Mucosa of descending colon (tissue), 3 donors: ENCODE measurements at regions of chr12 and their contacts with region 1.

Region 1: DNA sequence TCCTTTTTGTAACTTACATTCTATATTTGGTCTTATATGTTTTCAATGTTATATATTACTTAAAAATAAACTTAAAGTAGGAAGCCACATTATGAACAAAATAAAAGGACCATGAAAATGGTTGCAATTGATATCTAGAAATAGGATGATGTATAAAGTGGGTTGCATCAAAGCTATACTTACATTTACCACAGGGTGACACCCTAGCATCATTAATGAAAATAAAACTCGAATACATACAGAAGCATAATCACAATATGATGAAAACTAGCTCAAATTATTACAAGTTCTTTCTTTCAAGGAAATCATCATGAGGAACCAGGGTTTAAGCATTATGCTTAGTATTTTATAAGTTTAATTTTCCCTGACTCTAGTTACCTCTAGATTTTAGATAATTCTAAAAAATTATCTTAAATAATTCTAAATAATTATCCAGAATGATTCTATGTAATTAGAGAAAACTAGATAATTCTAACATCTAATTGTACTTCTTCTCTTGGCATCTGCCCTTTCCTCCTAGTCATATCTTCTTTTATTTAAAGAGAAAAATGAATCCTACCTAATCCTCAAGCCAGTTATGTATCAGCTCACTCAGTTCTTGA is 31.2 kb downstream of the TAS2R7 start:
- DNase-seq: no peak
- ATAC-seq: no peak
- H3K4me3 ChIP-seq: no peak overlapping the region
- H3K4me1 ChIP-seq: no peaks in the 10 kb centered on the region
- CTCF ChIP-seq: no peak

Region 2: DNA sequence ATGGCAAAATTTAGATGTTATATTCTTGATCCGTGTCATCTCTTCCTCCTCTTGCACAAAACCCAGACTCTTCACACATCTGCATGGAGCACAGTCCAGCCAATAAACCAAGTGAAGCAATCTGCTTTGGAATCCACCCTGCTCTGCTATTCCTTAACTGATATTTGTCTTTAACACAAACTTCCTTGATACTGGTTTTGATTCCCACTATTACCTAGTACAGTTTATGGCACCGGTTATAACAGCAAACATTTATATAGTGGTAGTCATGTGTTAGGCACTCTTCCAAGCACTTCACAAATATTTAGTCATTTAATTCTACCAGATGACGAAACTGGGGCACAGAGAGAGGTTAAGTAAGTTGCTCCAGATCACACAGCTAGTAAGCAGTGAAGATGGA is 109.9 kb before region 1 on chr12:
- intact Hi-C with region 1: no loop called
- DNase-seq: peak in 1 of 3 donors; percentile 56
- ATAC-seq: peak; percentile 99
- H3K4me3 ChIP-seq: no peak overlapping the region
- H3K4me1 ChIP-seq: peaks cover 20% of the 10 kb centered on the region
- CTCF ChIP-seq: no peak

Region 3: GRCh38 chr12:10708862-10709261 is 62.4 kb before region 1 on chr12:
- intact Hi-C with region 1: no loop called
- DNase-seq: no peak
- ATAC-seq: no peak
- H3K4me3 ChIP-seq: no peak overlapping the region
- H3K4me1 ChIP-seq: no peaks in the 10 kb centered on the region
- CTCF ChIP-seq: no peak

Region 4: DNA sequence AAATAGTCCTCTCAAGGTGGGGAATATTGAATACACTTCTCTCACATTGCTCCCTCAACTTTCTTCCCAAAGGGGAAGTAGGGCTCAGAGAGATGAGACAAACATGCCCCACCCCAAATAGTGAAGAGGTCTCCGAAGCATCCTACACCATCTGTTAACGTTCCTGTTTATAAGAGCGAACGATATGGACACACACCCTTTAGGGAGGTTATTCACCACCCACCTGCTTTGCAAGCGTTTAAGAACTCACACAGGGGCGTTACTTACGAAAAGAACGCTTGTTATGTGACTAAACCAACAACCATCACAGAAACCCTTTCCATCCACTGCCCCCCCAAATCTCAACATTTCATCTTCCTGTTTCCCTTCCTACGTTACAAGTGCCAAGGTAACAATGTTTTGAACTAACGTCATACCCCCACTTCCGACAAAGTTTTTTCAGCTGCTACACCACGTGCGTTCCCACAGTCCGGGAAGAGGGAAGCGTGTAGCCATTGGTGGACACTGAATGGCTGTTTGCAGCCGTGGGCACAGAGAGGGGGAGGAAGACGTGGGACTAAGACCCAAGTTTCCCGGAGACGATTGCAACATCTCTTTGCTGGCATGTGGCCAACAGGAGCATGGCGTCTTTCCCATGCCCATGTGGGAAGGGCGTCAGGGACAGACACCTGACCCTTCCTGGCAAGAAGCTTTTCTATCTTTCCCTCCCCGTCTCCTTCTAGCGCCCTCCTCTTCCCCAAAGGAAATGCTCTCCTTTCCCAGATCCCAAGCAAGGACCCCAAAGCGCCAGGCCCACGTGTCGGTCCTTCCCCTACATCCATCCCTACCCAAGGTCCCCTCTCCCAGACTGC is 49.4 kb before region 1 on chr12:
- intact Hi-C with region 1: no loop called
- DNase-seq: peak; percentile 86 to 89 (median 87)
- ATAC-seq: peak; percentile 81
- H3K4me3 ChIP-seq: peak overlapping the region; percentile 86
- H3K4me1 ChIP-seq: peaks cover 31% of the 10 kb centered on the region
- CTCF ChIP-seq: no peak

Region 5: GRCh38 chr12:11202811-11203210 is 431.6 kb after region 1 on chr12:
- intact Hi-C with region 1: loop called (anchors 10 kb)
- DNase-seq: no peak
- ATAC-seq: no peak
- H3K4me3 ChIP-seq: no peak overlapping the region
- H3K4me1 ChIP-seq: no peaks in the 10 kb centered on the region
- CTCF ChIP-seq: no peak

Region 6: GRCh38 chr12:11209108-11209507 is 437.9 kb after region 1 on chr12:
- intact Hi-C with region 1: loop called in 1 of 2 experiments (anchors 10 kb)
- DNase-seq: no peak
- ATAC-seq: no peak
- H3K4me3 ChIP-seq: no peak overlapping the region
- H3K4me1 ChIP-seq: no peaks in the 10 kb centered on the region
- CTCF ChIP-seq: no peak

Region 7: GRCh38 chr12:11486623-11487444 is 715.6 kb after region 1 on chr12:
- intact Hi-C with region 1: loop called (anchors 5 to 10 kb)
- DNase-seq: peak; percentile 57 to 84 (median 69)
- ATAC-seq: peak; percentile 99
- H3K4me3 ChIP-seq: no peak overlapping the region
- H3K4me1 ChIP-seq: no peaks in the 10 kb centered on the region
- CTCF ChIP-seq: peak; percentile 86